ENCODE measurements at regions of chr3 and their contacts with region 1.

Region 1: DNA sequence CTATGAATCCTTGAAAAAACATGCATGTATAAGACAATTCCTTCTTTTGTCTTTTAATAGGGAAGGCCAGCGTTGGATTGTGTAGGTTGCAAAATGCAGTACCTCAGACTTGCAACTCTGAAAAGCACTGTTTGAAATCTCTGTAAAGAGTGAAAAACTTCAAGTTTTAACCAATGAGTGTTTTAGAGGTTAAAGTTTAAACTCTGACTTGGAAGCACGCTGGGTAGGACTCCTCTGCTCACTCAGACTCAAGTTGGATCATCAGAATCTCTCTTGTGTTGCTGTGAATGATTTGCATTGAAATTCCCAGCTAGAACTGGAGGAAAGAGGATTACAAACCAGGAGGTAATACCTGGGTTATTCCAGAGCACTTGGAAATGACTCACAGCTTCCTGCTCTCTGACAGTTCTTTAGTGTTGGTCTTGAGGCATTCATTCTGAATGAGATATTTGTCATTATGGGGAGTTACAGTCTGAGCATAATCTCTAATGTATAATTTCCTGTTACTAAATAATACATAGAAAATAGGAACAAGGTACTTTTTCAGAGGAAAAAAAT is 49.1 kb downstream of the PLS1 start:
- DNase-seq: peak; percentile 47
- H3K4me3 Mint-ChIP-seq: no peak overlapping the region
- H3K27ac Mint-ChIP-seq: peak overlapping the region; percentile 1
- H3K4me1 Mint-ChIP-seq: peaks cover 63% of the 10 kb centered on the region
- H3K27me3 Mint-ChIP-seq: no peaks in the 10 kb centered on the region
- CTCF ChIP-seq: no peak

Region 2: DNA sequence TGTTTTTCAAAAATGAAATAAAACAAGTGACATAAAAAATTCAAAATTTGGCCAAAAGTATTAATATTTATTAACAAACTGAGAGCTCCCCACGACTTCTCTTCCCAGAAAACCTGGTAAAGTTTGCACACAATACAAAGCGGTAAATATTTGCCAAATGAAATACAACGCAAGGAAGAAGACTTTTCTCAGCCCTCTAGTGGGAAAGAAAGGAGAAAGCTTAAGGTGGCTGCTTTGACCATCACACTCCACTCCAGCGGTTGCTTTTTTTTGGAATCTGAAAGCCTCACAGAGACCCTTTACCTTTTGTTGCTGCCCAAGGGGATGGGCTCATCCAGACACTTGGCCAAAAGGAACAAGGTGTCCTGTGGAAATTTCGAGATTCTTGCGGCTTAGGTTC is 418.8 kb before region 1 on chr3:
- CTCF ChIA-PET with region 1: no interaction called
- intact Hi-C with region 1: no loop called
- DNase-seq: no peak
- H3K4me3 Mint-ChIP-seq: peak overlapping the region; percentile 94
- H3K27ac Mint-ChIP-seq: no peak overlapping the region
- H3K4me1 Mint-ChIP-seq: peaks cover 37% of the 10 kb centered on the region
- H3K27me3 Mint-ChIP-seq: no peaks in the 10 kb centered on the region
- CTCF ChIP-seq: no peak

Region 3: DNA sequence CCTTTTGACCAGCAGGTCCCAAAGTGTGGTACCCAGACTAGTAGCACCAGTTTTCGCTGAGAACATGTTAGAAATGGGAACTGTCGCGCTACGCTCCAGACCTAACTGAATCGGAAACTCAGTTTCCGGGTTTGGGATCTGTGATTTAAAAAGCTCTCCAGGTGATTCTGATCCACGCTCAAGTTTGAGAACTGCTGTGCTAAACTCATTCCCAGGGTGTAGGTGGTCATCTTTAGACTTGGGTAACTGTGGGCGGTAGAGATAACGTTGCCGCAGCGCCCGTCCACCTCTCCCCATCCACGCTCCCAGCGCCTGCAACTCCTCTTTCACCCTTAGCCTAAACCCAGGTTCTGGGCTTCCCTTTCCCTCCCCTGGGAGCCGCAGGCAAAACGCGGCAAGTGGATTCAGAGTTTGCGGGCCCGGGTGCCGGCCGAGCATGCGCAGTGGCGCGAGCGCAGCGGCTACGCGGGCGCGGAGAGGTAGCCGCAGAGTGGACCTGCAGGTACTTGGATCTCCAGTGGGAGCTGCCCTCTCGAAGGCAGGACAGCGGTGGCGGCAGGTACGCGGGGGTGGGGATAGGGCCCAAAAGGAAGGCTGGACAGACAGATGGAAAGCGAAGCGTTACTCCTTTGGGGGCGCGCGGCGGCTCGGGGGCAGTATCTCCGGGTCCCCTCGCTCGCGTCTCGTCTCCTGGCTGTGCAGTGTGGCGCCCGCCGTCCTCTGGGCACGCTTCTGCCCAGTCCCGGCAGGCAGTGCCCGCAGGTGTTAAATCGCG is 49.2 kb before region 1 on chr3 and contains the start of gene PLS1:
- CTCF ChIA-PET with region 1: interaction called, 3 read pairs
- intact Hi-C with region 1: loop called (anchors 5 kb)
- DNase-seq: peak; percentile 99
- H3K4me3 Mint-ChIP-seq: peak within 1 kb of the TSS; percentile 99
- H3K27ac Mint-ChIP-seq: peak within 1 kb of the TSS; percentile 84
- H3K4me1 Mint-ChIP-seq: peaks cover 37% of the 10 kb centered on the region
- H3K27me3 Mint-ChIP-seq: no peaks in the 10 kb centered on the region
- CTCF ChIP-seq: no peak
- total RNA-seq, gene PLS1: 155 and 165 TPM in 2 replicates

Region 4: DNA sequence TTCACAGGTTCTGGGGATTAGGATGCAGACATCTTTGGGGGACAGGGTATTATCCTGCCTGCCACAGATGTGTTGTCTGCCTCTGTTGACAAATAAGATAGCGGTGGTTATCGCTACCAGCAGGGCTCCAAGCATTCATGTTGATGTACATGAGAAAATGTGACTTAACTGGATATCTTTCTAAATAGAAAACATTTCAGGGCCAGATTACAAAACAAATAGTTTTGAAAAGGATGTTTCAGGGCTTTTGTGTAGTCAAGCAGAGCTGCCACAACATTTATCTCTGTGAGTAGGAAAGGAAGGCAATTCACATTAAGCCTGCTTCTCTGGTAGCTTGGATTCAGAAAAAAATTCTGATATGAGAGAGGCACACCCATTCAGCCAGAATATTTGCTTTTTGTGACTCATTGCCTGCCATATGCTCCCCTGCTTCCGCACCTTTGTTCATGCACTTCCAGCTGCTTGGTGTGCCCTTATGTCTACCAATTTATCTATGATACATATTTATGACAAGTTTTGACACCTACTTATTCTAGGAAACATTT is 26.3 kb before region 1 on chr3:
- CTCF ChIA-PET with region 1: no interaction called
- intact Hi-C with region 1: loop called (anchors 1 kb)
- DNase-seq: peak; percentile 71
- H3K4me3 Mint-ChIP-seq: peak overlapping the region; percentile 25
- H3K27ac Mint-ChIP-seq: peak overlapping the region; percentile 92
- H3K4me1 Mint-ChIP-seq: peaks cover 33% of the 10 kb centered on the region
- H3K27me3 Mint-ChIP-seq: no peaks in the 10 kb centered on the region
- CTCF ChIP-seq: no peak

Region 5: DNA sequence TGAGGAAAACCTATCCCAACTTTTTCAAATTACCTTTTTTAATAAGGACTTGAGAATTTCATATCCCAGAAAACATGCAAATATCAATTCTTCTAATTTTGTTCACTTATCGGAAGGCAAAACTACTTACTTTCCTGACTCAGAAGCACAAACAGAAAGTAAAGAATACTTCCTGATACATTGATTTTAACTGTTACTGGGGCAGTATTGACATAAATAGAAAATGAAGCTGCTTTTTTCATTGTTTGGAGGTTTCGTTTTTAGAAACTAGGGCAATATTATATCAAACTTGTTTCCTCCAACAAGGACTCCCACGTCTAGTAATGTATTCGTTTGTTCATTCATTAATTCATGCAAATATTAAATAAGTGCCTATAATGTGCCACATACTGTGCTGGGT is 299.0 kb after region 1 on chr3:
- CTCF ChIA-PET with region 1: no interaction called
- intact Hi-C with region 1: no loop called
- DNase-seq: no peak
- H3K4me3 Mint-ChIP-seq: no peak overlapping the region
- H3K27ac Mint-ChIP-seq: no peak overlapping the region
- H3K4me1 Mint-ChIP-seq: peaks cover 36% of the 10 kb centered on the region
- H3K27me3 Mint-ChIP-seq: peaks cover 11% of the 10 kb centered on the region
- CTCF ChIP-seq: no peak

Measured in Calu3 (cell line).